ENCODE measurements at regions of chr4 and their contacts with region 1.

Region 1: DNA sequence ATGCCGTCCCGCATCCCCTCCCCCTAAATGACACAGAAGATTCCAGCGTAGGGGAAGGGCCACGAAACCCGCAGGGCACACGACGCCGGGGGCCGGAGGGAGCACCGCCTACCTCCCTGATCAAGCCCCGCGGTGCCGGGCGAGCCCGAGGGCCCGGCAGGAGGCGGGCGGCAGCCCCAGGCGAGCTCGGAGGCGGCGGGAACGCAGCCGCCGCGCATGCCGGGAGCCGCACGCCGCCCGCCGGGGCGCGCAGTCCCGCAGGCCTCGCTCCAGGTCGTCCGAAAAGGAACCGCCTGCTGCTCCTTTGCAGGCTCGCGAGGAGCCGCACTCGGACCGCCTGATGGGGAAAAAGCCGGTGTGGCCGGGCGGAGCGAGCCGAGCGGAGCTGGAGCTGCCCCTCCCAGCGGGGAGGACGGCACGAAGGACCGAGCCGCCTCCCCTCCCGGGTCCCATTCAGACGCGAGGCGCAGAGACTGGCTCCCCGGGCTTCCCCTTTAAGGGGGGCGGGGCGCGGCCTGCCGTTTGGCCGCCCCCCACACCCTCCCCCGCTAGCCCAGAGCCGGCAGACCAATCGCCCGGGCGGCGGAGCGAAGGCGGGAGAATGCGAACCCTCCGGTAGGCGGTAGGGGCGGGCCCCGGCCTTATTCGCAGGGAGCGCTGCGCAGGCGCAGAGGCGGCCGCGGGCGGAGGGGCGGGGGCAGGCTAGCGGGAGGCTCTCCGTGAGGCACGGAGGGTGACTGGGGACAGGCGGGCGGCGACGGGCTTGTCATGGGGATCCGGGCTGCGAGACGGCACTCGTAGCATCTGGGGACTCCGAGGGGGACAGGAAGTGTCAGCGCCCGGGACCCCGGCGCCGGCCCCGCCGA is 561 bp upstream of the ING2 start:
- DNase-seq: peak; percentile 98 to 99
- ATAC-seq: peak; percentile 73 to 80
- H3K4me3 ChIP-seq: peak overlapping the region; percentile 89 to 96 (median 92)
- H3K27ac ChIP-seq: peak overlapping the region; percentile 90 to 97 (median 96)
- H3K4me1 ChIP-seq: peaks cover 18 to 19% of the 10 kb centered on the region in 2 donors
- H3K27me3 ChIP-seq: no peaks in the 10 kb centered on the region
- CTCF ChIP-seq: peak; percentile 8 to 57 (median 37)
- POLR2A ChIP-seq: peak; percentile 92 to 96

Region 2: GRCh38 chr4:183471946-183472708 is 32.2 kb before region 1 on chr4:
- in situ Hi-C with region 1: no loop called
- intact Hi-C with region 1: loop called (anchors 2 kb)
- DNase-seq: peak; percentile 58 to 68
- ATAC-seq: peak; percentile 85 to 86
- H3K4me3 ChIP-seq: peak overlapping the region in 3 of 4 donors; percentile 11 to 27 (median 14)
- H3K27ac ChIP-seq: no peak overlapping the region
- H3K4me1 ChIP-seq: peaks cover 0 to 4% of the 10 kb centered on the region in 2 donors
- H3K27me3 ChIP-seq: no peaks in the 10 kb centered on the region
- CTCF ChIP-seq: peak; percentile 74 to 93 (median 85)
- POLR2A ChIP-seq: no peak

Region 3: GRCh38 chr4:183602557-183603027 is 98.3 kb after region 1 on chr4:
- in situ Hi-C with region 1: loop called in 1 of 4 experiments (anchors 10 kb)
- intact Hi-C with region 1: loop called (anchors 1 kb)
- DNase-seq: no peak
- ATAC-seq: peak in 1 of 2 donors; percentile 46
- H3K4me3 ChIP-seq: no peak overlapping the region
- H3K27ac ChIP-seq: peak overlapping the region in 3 of 4 donors; percentile 7 to 28 (median 24)
- H3K4me1 ChIP-seq: peaks cover 0 to 5% of the 10 kb centered on the region in 2 donors
- H3K27me3 ChIP-seq: no peaks in the 10 kb centered on the region
- CTCF ChIP-seq: peak; percentile 35 to 51 (median 42)
- POLR2A ChIP-seq: no peak

Region 4: GRCh38 chr4:183659029-183659871 is 155.0 kb after region 1 on chr4 and contains the starts of genes RWDD4 and TRAPPC11:
- in situ Hi-C with region 1: loop called in 2 of 4 experiments (anchors 10 kb)
- intact Hi-C with region 1: loop called (anchors 1 kb)
- DNase-seq: peak; percentile 97 to 98
- ATAC-seq: peak; percentile 99 to 100
- H3K4me3 ChIP-seq: peak within 1 kb of the TSS; percentile 72 to 99 (median 76)
- H3K27ac ChIP-seq: peak within 1 kb of the TSS; percentile 82 to 96 (median 94)
- H3K4me1 ChIP-seq: peaks cover 21 to 32% of the 10 kb centered on the region in 2 donors
- H3K27me3 ChIP-seq: no peaks in the 10 kb centered on the region
- CTCF ChIP-seq: peak in 4 of 5 experiments; percentile 32 to 57 (median 42)
- POLR2A ChIP-seq: peak; percentile 95
- total RNA-seq, gene RWDD4: 34.6 to 65.2 (median 51.9) TPM
- total RNA-seq, gene TRAPPC11: 19.3 to 31.7 (median 20.8) TPM

Region 5: GRCh38 chr4:184343502-184344177 is 839.3 kb after region 1 on chr4:
- in situ Hi-C with region 1: no loop called
- intact Hi-C with region 1: loop called (anchors 2 kb)
- DNase-seq: peak; percentile 77 to 84
- ATAC-seq: peak; percentile 64 to 69
- H3K4me3 ChIP-seq: peak overlapping the region; percentile 56 to 82 (median 67)
- H3K27ac ChIP-seq: peak overlapping the region; percentile 91 to 97 (median 92)
- H3K4me1 ChIP-seq: peaks cover 51 to 54% of the 10 kb centered on the region in 2 donors
- H3K27me3 ChIP-seq: no peaks in the 10 kb centered on the region
- CTCF ChIP-seq: no peak
- POLR2A ChIP-seq: peak; percentile 50 to 69

Measured in gastrocnemius medialis (tissue), 4 donors.